Activated CD8-positive, alpha-beta T cell treated with anti-CD3 and anti-CD28 coated beads for 36 hours (primary cell): ENCODE measurements at regions of chr15 and their contacts with region 1.

Region 1: DNA sequence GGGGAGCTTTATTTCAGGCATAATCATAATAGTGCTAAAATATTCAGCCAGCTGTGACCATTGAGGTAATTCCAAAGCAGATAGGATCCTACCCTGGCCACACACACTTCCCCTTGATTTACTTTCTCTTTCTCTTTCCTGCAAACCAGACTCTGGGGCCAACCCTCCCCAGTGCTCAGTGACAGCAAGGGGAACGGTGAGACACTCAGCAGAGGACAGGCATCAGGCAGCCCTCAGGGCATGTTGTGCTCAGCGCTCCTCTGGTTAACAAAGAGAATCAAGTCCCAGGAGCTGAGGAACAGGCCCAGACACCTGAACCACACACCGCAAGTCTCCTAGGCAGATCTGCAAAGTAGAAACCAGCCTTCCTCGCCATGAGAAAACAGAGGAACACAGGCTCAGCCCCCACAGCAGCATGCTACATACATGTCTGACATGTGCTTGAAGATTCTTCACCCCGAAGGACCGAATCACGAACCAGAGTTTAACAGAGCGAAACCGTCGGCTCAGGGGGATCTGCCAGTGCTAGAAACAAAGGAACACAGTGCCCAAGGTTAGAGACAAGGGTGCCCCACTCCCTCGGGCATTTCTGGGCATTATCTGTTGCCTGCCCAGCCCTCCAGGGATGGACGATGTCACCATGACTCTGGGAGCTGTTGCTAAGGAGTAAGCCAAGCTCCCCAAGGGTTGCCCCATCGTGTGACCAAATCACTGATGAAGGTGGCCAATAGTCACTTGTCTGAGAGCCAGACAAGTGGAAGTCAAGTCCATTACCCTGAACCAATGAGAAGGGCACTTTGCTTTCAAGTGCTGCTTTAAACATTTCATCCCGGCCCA is 17.5 kb downstream of the HDC start:
- DNase-seq: peak; percentile 77
- ATAC-seq: peak; percentile 99
- H3K4me3 Mint-ChIP-seq: peak overlapping the region; percentile 69
- H3K27ac Mint-ChIP-seq: peak overlapping the region; percentile 97
- H3K4me1 Mint-ChIP-seq: peaks cover 28% of the 10 kb centered on the region
- H3K27me3 Mint-ChIP-seq: no peaks in the 10 kb centered on the region
- CTCF ChIP-seq: no peak

Region 2: GRCh38 chr15:49769225-49769624 is 478.8 kb before region 1 on chr15:
- CTCF ChIA-PET with region 1: no interaction called
- POLR2A ChIA-PET with region 1: no interaction called
- intact Hi-C with region 1: no loop called
- DNase-seq: no peak
- ATAC-seq: no peak
- H3K4me3 Mint-ChIP-seq: no peak overlapping the region
- H3K27ac Mint-ChIP-seq: no peak overlapping the region
- H3K4me1 Mint-ChIP-seq: no peaks in the 10 kb centered on the region
- H3K27me3 Mint-ChIP-seq: no peaks in the 10 kb centered on the region
- CTCF ChIP-seq: no peak

Region 3: DNA sequence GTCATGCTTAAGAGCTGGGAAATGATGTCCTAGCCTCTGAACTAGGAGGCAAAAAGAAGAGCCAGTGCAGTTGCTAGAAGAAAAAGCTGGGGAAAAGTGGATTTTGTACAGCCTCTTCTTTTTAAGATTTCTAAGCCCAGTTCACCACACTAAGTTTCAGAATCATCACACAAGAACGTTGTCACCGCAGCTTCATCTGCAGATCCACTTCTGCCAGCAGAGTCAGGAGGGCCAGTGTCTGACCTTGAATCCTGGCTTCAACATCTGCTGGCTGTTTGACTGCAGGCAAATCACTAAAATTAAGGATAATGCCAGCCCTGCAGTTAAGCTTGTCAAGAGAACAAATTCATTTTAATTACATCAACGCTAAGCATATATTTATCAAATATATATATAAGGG is 18.7 kb before region 1 on chr15:
- CTCF ChIA-PET with region 1: no interaction called
- POLR2A ChIA-PET with region 1: no interaction called
- intact Hi-C with region 1: no loop called
- DNase-seq: no peak
- ATAC-seq: no peak
- H3K4me3 Mint-ChIP-seq: no peak overlapping the region
- H3K27ac Mint-ChIP-seq: no peak overlapping the region
- H3K4me1 Mint-ChIP-seq: no peaks in the 10 kb centered on the region
- H3K27me3 Mint-ChIP-seq: no peaks in the 10 kb centered on the region
- CTCF ChIP-seq: no peak

Region 4: GRCh38 chr15:50261981-50262380 is 13.9 kb after region 1 on chr15:
- CTCF ChIA-PET with region 1: interaction called, 14 read pairs
- POLR2A ChIA-PET with region 1: interaction called, 14 read pairs
- intact Hi-C with region 1: no loop called
- DNase-seq: peak; percentile 42
- ATAC-seq: peak; percentile 21
- H3K4me3 Mint-ChIP-seq: no peak overlapping the region
- H3K27ac Mint-ChIP-seq: peak overlapping the region; percentile 93
- H3K4me1 Mint-ChIP-seq: peaks cover 48% of the 10 kb centered on the region
- H3K27me3 Mint-ChIP-seq: peaks cover 1% of the 10 kb centered on the region
- CTCF ChIP-seq: peak; percentile 23

Region 5: DNA sequence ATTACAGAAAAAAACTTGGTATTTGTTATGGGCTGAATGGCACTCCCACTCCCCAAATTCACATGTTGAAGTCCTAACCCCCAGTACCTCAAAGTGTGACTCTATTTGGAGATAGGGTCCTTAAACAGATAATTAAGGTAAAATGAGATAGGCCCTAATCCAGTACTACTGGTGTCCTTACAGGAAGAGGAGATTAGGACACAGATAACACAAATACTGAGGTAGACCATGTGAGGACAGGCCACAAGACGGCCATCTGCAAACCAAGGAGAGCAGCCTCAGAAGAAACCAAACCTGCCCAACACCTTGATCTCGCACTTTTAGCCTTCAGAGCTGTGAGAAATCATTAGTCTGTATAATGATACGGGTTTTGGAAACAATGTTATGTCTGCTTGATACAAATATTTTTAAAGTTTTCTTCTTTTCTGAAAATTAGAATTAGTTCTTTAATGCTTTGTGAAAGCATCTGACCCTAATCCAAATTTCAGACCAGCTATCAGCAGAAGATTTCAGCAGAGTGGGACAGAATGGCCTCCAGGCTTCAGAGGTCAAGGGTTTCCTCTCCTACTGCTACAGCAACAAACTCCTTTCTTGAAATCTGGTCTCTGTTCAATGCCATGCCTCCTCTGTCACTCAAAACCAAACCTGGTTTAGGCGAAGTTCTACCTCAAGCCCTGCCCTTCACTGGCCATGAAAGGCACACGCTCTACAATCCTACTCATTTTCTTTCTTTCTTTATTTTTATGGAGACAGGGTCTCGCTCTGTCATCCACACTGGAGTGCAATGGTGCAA is 39.5 kb after region 1 on chr15:
- CTCF ChIA-PET with region 1: no interaction called
- POLR2A ChIA-PET with region 1: no interaction called
- intact Hi-C with region 1: no loop called
- DNase-seq: no peak
- ATAC-seq: no peak
- H3K4me3 Mint-ChIP-seq: no peak overlapping the region
- H3K27ac Mint-ChIP-seq: no peak overlapping the region
- H3K4me1 Mint-ChIP-seq: no peaks in the 10 kb centered on the region
- H3K27me3 Mint-ChIP-seq: no peaks in the 10 kb centered on the region
- CTCF ChIP-seq: no peak

Region 6: GRCh38 chr15:50542887-50543210 is 294.8 kb after region 1 on chr15:
- CTCF ChIA-PET with region 1: no interaction called
- POLR2A ChIA-PET with region 1: no interaction called
- intact Hi-C with region 1: no loop called
- DNase-seq: no peak
- ATAC-seq: no peak
- H3K4me3 Mint-ChIP-seq: no peak overlapping the region
- H3K27ac Mint-ChIP-seq: no peak overlapping the region
- H3K4me1 Mint-ChIP-seq: no peaks in the 10 kb centered on the region
- H3K27me3 Mint-ChIP-seq: peaks cover 3% of the 10 kb centered on the region
- CTCF ChIP-seq: no peak